WTC11 (cell line): ENCODE measurements at regions of chr19 and their contacts with region 1.

Region 1: DNA sequence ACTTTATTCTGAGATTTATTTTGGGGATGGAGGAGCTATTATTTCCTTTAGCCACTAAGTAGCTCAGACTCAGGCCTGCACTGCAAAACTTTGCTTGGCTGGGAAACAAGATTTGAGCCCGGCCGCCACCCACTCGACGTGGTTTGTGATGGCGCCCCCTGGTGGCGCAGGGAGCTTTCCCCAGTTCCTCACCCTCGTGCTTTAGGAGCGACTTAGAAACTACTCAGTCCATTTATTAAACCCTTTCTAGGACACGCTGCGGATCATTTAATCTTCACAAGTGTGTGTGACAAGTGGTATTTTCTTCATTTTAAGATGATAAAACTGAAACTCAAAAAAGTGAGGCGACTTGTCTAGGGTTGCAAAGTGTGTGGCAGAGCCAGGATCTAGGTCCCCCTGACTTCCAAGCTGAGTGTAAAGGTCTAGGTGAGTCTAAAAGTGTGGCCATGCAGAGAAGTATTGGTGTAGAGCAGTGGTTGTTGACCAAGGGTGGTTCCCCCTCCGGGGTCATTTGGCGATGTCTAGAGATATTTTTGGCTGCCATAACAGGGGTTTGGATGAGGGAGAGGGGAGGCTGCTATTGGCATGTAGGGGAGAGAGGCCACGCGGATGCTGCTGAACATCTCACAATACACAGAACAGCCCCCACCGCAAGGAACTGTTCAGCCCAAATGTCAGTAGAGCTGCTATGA is 2.2 kb downstream of the CXCL17 start:
- DNase-seq: peak; percentile 85
- ATAC-seq: peak; percentile 70
- H3K4me3 Mint-ChIP-seq: no peak overlapping the region
- H3K27ac Mint-ChIP-seq: no peak overlapping the region
- H3K4me1 Mint-ChIP-seq: peaks cover 19% of the 10 kb centered on the region
- H3K27me3 Mint-ChIP-seq: peaks cover 40% of the 10 kb centered on the region
- CTCF ChIP-seq: peak; percentile 97

Region 2: GRCh38 chr19:42370626-42371170 is 69.8 kb before region 1 on chr19:
- CTCF ChIA-PET with region 1: interaction called, 12 read pairs
- POLR2A ChIA-PET with region 1: interaction called, 3 read pairs
- DNase-seq: no peak
- ATAC-seq: peak; percentile 14
- H3K4me3 Mint-ChIP-seq: peak overlapping the region; percentile 43; the same call in 1 of the 2 replicates
- H3K27ac Mint-ChIP-seq: peak overlapping the region; percentile 84
- H3K4me1 Mint-ChIP-seq: peaks cover 51% of the 10 kb centered on the region
- H3K27me3 Mint-ChIP-seq: no peaks in the 10 kb centered on the region
- CTCF ChIP-seq: no peak

Region 3: DNA sequence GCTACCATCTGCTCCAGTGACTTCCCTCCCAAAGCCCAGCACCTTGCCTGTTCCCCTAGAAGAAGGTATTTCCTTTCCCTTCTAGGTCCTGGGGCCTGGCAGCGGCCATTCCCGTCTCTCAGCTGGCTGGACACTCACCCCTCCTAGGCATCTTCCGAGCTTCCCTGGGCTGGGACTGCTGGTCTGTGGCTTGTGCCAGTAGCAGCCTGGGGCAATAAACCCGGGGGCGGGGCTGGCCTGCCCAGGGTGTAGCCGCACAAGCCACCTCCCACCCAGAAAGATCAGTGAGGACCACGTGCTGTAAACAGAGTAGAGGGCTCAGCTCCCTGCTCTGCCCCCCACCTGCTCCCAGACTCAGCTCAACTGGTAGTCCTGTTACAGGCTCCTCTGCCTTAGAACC is 28.3 kb before region 1 on chr19:
- CTCF ChIA-PET with region 1: interaction called, 15 read pairs
- POLR2A ChIA-PET with region 1: no interaction called
- DNase-seq: peak; percentile 62
- ATAC-seq: peak; percentile 82
- H3K4me3 Mint-ChIP-seq: no peak overlapping the region
- H3K27ac Mint-ChIP-seq: no peak overlapping the region
- H3K4me1 Mint-ChIP-seq: peaks cover 15% of the 10 kb centered on the region
- H3K27me3 Mint-ChIP-seq: peaks cover 90% of the 10 kb centered on the region
- CTCF ChIP-seq: no peak

Region 4: GRCh38 chr19:42465827-42466280 is 25.4 kb after region 1 on chr19:
- CTCF ChIA-PET with region 1: interaction called, 51 read pairs
- POLR2A ChIA-PET with region 1: no interaction called
- DNase-seq: no peak
- ATAC-seq: peak; percentile 53
- H3K4me3 Mint-ChIP-seq: no peak overlapping the region
- H3K27ac Mint-ChIP-seq: no peak overlapping the region
- H3K4me1 Mint-ChIP-seq: peaks cover 23% of the 10 kb centered on the region
- H3K27me3 Mint-ChIP-seq: peaks cover 4% of the 10 kb centered on the region
- CTCF ChIP-seq: no peak

Region 5: GRCh38 chr19:42529248-42529764 is 88.8 kb after region 1 on chr19:
- CTCF ChIA-PET with region 1: interaction called, 49 read pairs
- POLR2A ChIA-PET with region 1: no interaction called
- DNase-seq: peak; percentile 80
- ATAC-seq: peak; percentile 81
- H3K4me3 Mint-ChIP-seq: no peak overlapping the region
- H3K27ac Mint-ChIP-seq: no peak overlapping the region; the same call in 1 of the 2 replicates
- H3K4me1 Mint-ChIP-seq: peaks cover 26% of the 10 kb centered on the region
- H3K27me3 Mint-ChIP-seq: no peaks in the 10 kb centered on the region; the same call in 1 of the 2 replicates
- CTCF ChIP-seq: peak; percentile 88

Region 6: GRCh38 chr19:42596391-42597072 is 156.0 kb after region 1 on chr19:
- CTCF ChIA-PET with region 1: interaction called, 24 read pairs
- POLR2A ChIA-PET with region 1: no interaction called
- DNase-seq: peak; percentile 68
- ATAC-seq: peak; percentile 84
- H3K4me3 Mint-ChIP-seq: no peak overlapping the region
- H3K27ac Mint-ChIP-seq: no peak overlapping the region
- H3K4me1 Mint-ChIP-seq: peaks cover 4% of the 10 kb centered on the region
- H3K27me3 Mint-ChIP-seq: peaks cover 15% of the 10 kb centered on the region
- CTCF ChIP-seq: peak; percentile 94